Mucosa of descending colon (tissue), 3 donors: ENCODE measurements at regions of chr12 and their contacts with region 1.

Region 1: DNA sequence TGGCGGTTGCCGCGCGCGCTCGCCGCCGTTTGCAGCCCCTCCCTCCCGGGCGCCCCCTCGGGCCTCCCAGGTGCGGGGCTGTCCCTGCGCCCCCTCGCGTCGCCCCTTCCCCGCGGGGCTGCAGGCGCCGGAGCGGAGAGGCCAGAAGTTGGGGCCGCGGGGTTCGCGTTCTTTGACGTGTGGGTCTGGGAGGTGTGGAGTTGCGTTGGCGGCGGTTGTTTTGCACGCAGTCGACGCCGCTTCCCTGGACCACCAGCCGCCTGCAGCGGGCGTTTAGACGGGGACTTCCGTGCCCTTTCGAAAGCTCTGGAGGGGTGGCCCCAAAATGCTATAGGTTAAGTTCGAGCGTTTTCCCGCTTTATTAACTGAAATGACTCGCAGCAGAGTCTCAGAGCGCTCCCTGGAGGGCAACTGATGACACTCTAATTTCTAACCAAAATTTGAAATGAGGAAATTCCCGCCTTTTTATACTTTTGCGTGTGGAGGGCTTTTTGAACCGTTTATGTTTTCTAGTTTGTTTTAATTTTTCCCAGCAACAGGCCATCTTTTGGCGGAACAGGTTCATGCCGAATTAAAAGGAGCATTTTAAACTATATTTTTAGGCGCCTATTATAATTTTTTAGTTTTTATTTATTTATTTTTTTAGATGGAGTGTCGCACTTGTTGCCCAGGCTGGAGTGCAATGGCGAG is 939 bp downstream of the TMPO start:
- DNase-seq: peak; percentile 72 to 82 (median 81)
- ATAC-seq: peak; percentile 74
- H3K4me3 ChIP-seq: peak overlapping the region; percentile 99
- H3K4me1 ChIP-seq: peaks cover 17% of the 10 kb centered on the region
- CTCF ChIP-seq: peak; percentile 25

Region 2: GRCh38 chr12:98424726-98425401 is 91.5 kb before region 1 on chr12:
- intact Hi-C with region 1: loop called in 1 of 2 experiments (anchors 10 kb)
- DNase-seq: peak in 2 of 3 donors; percentile 67 to 83
- ATAC-seq: peak; percentile 79
- H3K4me3 ChIP-seq: no peak overlapping the region
- H3K4me1 ChIP-seq: no peaks in the 10 kb centered on the region
- CTCF ChIP-seq: peak; percentile 24